ENCODE measurements at regions of chr4 and their contacts with region 1.

Region 1: GRCh38 chr4:77203380-77204197 is 46.6 kb downstream of the CCNG2 start:
- DNase-seq: peak; percentile 68
- H3K4me3 Mint-ChIP-seq: no peak overlapping the region
- H3K27ac Mint-ChIP-seq: no peak overlapping the region
- H3K4me1 Mint-ChIP-seq: peaks cover 6% of the 10 kb centered on the region
- H3K27me3 Mint-ChIP-seq: no peaks in the 10 kb centered on the region

Region 2: DNA sequence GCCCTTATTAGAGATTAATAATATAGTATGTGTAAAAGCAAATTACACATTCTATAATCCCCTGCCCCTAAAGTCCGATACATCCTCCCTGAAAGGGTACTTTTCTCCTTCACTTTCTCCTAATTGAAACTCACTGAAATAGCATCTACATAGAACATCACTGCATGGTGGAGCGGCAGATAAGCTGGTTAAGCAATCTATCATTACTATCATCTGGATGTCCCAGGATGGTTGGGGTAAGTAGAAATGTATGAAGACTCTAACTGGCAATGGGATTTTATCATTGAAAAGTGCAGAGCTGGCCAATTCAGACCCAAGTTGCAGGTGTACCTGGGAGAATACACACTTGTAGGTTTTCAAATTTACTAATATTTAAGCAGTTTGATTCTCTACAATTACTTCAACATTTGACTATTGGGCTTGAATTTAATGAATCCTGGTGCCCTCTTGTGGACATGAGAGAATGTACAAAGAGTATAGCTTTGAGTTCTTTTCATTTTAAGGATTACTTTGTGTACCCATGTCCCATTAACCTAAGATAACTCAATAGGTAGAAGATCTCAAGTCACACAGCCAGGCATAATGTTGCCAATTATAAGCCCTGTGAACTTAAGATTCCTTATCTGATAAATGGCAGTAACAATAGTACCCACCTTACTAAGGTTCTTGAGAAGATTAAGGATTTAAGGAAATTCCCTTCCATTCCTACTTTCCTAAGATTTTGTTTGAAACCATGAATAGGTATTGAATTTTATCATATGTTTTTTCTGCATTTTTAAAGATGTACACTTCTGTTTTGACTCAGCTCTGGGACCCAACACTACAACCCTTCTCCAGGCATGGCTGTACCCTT is 698.8 kb before region 1 on chr4:
- CTCF ChIA-PET with region 1: interaction called, 14 read pairs
- POLR2A ChIA-PET with region 1: no interaction called
- intact Hi-C with region 1: loop called (anchors 5 kb)
- DNase-seq: no peak
- H3K4me3 Mint-ChIP-seq: no peak overlapping the region
- H3K27ac Mint-ChIP-seq: no peak overlapping the region
- H3K4me1 Mint-ChIP-seq: no peaks in the 10 kb centered on the region
- H3K27me3 Mint-ChIP-seq: peaks cover 4% of the 10 kb centered on the region

Region 3: DNA sequence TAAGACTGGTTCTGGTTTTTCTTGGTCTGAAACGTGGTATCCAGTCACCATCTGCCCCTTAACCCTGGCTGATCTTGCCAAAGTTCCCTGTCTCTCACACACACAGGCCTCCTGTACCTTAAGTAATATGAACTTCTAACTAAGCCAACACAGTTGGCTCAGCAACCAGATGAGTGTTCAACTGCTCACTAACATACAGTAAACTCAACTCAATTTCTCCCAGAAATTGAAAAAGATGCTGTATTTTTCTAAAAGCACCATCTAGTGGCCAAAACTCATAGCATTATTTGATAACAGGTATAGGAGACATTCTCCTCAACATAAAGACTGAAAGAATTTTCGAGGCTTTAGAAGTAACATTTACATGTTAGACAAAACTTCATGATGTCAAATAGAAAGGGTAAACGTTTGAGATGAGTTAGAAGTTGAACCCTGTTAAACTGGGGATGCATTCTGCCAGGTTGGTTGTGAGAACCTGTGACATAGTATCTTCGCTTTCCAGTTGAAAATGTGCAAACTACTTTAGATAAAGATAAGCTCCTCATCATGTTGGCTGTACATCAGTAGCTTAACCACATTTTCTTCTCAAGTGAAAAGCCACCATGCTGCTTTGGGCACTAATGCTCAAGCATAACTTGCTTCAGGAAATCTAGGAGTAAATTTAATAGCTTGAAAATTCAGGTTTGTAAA is 159.0 kb before region 1 on chr4:
- CTCF ChIA-PET with region 1: interaction called, 46 read pairs
- POLR2A ChIA-PET with region 1: no interaction called
- intact Hi-C with region 1: no loop called
- DNase-seq: no peak
- H3K4me3 Mint-ChIP-seq: no peak overlapping the region
- H3K27ac Mint-ChIP-seq: no peak overlapping the region
- H3K4me1 Mint-ChIP-seq: peaks cover 8% of the 10 kb centered on the region
- H3K27me3 Mint-ChIP-seq: no peaks in the 10 kb centered on the region

Region 4: GRCh38 chr4:77075869-77076799 is 127.5 kb before region 1 on chr4 and contains the start of gene CCNI:
- CTCF ChIA-PET with region 1: interaction called, 12 read pairs
- POLR2A ChIA-PET with region 1: no interaction called
- intact Hi-C with region 1: no loop called
- DNase-seq: peak; percentile 94
- H3K4me3 Mint-ChIP-seq: peak within 1 kb of the TSS; percentile 93
- H3K27ac Mint-ChIP-seq: no peak within 1 kb of the TSS
- H3K4me1 Mint-ChIP-seq: peaks cover 26% of the 10 kb centered on the region
- H3K27me3 Mint-ChIP-seq: no peaks in the 10 kb centered on the region
- total RNA-seq, gene CCNI: 259 to 264 TPM

Region 5: GRCh38 chr4:77156533-77156911 is 47.1 kb before region 1 on chr4:
- CTCF ChIA-PET with region 1: interaction called, 6 read pairs
- POLR2A ChIA-PET with region 1: interaction called, 4 read pairs
- intact Hi-C with region 1: loop called (anchors 2 kb)
- DNase-seq: peak; percentile 97
- H3K4me3 Mint-ChIP-seq: peak overlapping the region; percentile 95
- H3K27ac Mint-ChIP-seq: peak overlapping the region; percentile 94
- H3K4me1 Mint-ChIP-seq: peaks cover 27% of the 10 kb centered on the region
- H3K27me3 Mint-ChIP-seq: no peaks in the 10 kb centered on the region

Region 6: GRCh38 chr4:77240469-77241066 is 37.0 kb after region 1 on chr4:
- CTCF ChIA-PET with region 1: no interaction called
- POLR2A ChIA-PET with region 1: no interaction called
- intact Hi-C with region 1: no loop called
- DNase-seq: peak; percentile 77
- H3K4me3 Mint-ChIP-seq: no peak overlapping the region
- H3K27ac Mint-ChIP-seq: no peak overlapping the region
- H3K4me1 Mint-ChIP-seq: no peaks in the 10 kb centered on the region
- H3K27me3 Mint-ChIP-seq: peaks cover 15% of the 10 kb centered on the region

Measured in activated CD4-positive, alpha-beta memory T cell treated with anti-CD3 and anti-CD28 coated beads for 36 hours (primary cell).